Caco-2 (cell line): ENCODE measurements at regions of chr10 and their contacts with region 1.

Region 1: DNA sequence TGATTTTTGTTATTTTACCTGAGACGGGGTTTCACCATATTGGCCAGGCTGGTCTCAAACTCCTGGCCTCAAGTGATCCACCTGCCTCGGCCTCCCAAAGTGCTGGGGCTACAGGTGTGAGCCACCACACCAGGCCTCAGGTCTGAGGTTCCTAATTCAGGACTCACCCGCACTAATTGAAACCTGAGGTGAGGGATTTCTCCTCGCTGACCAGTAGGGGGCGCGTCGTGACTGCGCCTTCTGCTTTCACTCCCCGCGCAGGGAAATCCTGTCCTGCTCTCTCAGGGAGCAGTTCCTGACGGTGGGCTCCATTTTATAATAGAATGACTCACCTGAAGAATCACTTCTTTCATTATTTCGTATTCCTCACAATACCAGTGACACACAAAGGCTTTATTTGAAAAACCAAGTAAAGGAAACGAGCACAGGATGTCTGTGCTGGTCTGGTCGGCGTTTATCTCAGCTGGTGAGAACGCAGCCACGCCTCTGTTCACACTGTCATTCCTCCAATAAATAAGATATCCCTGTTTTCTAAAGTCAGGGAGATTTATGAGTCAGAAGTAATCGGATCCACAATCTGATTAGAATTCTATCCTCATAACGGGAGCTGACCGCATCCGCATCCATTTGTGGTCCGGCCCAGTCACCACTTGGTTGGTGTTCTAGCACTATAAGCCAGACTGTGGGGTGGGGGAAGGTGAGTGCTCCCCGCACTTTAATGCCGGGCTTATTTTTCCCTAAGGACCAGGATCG is 35.4 kb downstream of the BAG3 start:
- DNase-seq: peak; percentile 82 to 85
- H3K4me3 ChIP-seq: no peak overlapping the region
- H3K4me3 Mint-ChIP-seq: peak overlapping the region; percentile 63
- H3K27ac Mint-ChIP-seq: peak overlapping the region; percentile 60
- H3K4me1 ChIP-seq: peaks cover 32% of the 10 kb centered on the region
- H3K4me1 Mint-ChIP-seq: peaks cover 32% of the 10 kb centered on the region
- H3K27me3 ChIP-seq: no peaks in the 10 kb centered on the region
- H3K27me3 Mint-ChIP-seq: no peaks in the 10 kb centered on the region
- CTCF ChIP-seq: peak; percentile 83 to 98

Region 2: DNA sequence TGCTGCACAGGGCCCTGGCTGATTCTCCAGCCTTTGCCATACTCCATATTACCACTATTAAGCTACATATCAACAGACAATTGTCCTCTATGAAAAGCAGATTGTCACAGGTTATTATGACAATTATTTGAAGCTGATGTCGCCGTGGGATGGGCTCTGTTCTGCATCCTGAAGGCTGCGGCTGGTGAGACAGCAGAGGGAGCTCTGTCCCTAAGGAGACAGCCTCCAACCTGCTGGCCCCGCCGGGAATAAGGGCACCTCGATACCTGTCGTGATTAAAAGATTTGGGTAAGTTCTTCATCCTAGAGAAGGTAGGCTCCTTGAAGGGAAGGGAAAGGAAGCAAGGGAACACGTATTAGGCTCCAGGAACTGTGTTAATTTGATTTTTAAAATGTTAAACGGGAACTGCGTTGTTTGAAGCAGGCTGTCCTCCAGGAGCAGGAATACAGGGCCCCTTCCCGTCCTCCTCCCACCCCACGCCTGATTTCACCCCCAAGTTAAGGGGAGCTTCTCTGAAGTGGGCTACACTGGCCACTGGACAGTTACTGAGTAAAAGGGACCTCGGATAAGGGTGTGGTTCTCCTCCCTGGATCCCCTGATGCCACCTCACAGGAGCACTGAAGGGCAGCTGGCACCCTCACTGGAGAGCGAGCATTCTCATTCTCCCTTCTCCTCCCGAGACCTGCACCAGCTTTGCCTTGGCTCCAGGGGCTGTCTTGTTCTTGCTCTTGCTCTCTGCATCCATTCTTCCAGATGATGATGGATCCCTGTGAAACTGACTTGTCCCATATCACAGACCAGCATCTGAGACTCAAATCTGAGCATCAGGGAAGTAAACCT is 78.1 kb before region 1 on chr10:
- CTCF ChIA-PET with region 1: interaction called, 6 read pairs
- POLR2A ChIA-PET with region 1: no interaction called
- intact Hi-C with region 1: loop called (anchors 1 kb)
- DNase-seq: peak; percentile 68 to 74
- H3K4me3 ChIP-seq: peak overlapping the region; percentile 22; the same call in 1 of the 2 replicates
- H3K4me3 Mint-ChIP-seq: peak overlapping the region; percentile 67
- H3K27ac Mint-ChIP-seq: no peak overlapping the region
- H3K4me1 ChIP-seq: no peaks in the 10 kb centered on the region; the same call in 1 of the 2 replicates
- H3K4me1 Mint-ChIP-seq: peaks cover 12% of the 10 kb centered on the region
- H3K27me3 ChIP-seq: no peaks in the 10 kb centered on the region
- H3K27me3 Mint-ChIP-seq: no peaks in the 10 kb centered on the region
- CTCF ChIP-seq: peak; percentile 76 to 92

Region 3: GRCh38 chr10:119742947-119743648 is 56.5 kb after region 1 on chr10:
- CTCF ChIA-PET with region 1: interaction called, 3 read pairs
- POLR2A ChIA-PET with region 1: interaction called, 3 read pairs
- intact Hi-C with region 1: loop called (anchors 1 kb)
- DNase-seq: peak; percentile 83 to 93
- H3K4me3 ChIP-seq: peak overlapping the region; percentile 17
- H3K4me3 Mint-ChIP-seq: peak overlapping the region; percentile 62
- H3K27ac Mint-ChIP-seq: peak overlapping the region; percentile 79
- H3K4me1 ChIP-seq: peaks cover 60% of the 10 kb centered on the region
- H3K4me1 Mint-ChIP-seq: peaks cover 47% of the 10 kb centered on the region
- H3K27me3 ChIP-seq: no peaks in the 10 kb centered on the region
- H3K27me3 Mint-ChIP-seq: no peaks in the 10 kb centered on the region
- CTCF ChIP-seq: no peak

Region 4: DNA sequence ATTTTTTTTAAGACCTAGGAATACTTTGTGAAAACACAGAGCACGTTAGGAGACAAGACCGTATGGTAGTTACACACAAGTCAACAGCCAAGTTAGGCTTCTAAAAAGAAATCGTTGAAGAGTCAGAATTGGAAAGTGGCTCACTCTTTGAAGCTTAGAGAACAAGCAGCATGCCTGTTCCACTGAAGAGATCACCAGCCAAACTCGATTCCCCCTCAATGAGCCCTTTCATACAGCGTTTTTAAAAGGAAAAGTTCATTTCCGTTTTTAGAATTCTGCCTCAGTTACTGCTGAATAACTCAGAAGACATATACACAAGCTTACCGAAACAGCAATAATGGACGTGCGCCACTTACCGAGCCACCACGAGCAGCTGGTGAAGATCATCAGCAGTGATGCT is 145.0 kb after region 1 on chr10:
- CTCF ChIA-PET with region 1: no interaction called
- POLR2A ChIA-PET with region 1: no interaction called
- intact Hi-C with region 1: loop called (anchors 2 kb)
- DNase-seq: no peak
- H3K4me3 ChIP-seq: no peak overlapping the region
- H3K4me3 Mint-ChIP-seq: no peak overlapping the region
- H3K27ac Mint-ChIP-seq: no peak overlapping the region
- H3K4me1 ChIP-seq: no peaks in the 10 kb centered on the region; the same call in 1 of the 2 replicates
- H3K4me1 Mint-ChIP-seq: peaks cover 19% of the 10 kb centered on the region
- H3K27me3 ChIP-seq: no peaks in the 10 kb centered on the region
- H3K27me3 Mint-ChIP-seq: no peaks in the 10 kb centered on the region
- CTCF ChIP-seq: no peak

Region 5: GRCh38 chr10:119892188-119893065 is 205.8 kb after region 1 on chr10 and contains the start of gene SEC23IP:
- CTCF ChIA-PET with region 1: no interaction called
- POLR2A ChIA-PET with region 1: interaction called, 4 read pairs
- intact Hi-C with region 1: loop called (anchors 10 kb)
- DNase-seq: peak; percentile 95 to 96
- H3K4me3 ChIP-seq: peak within 1 kb of the TSS; percentile 93
- H3K4me3 Mint-ChIP-seq: peak within 1 kb of the TSS; percentile 79
- H3K27ac Mint-ChIP-seq: peak within 1 kb of the TSS; percentile 76
- H3K4me1 ChIP-seq: peaks cover 31% of the 10 kb centered on the region
- H3K4me1 Mint-ChIP-seq: peaks cover 38% of the 10 kb centered on the region
- H3K27me3 ChIP-seq: no peaks in the 10 kb centered on the region
- H3K27me3 Mint-ChIP-seq: no peaks in the 10 kb centered on the region
- CTCF ChIP-seq: no peak
- total RNA-seq, gene SEC23IP: 108 and 116 TPM in 2 replicates